ENCODE measurements at regions of chr9 and their contacts with region 1.

Region 1: DNA sequence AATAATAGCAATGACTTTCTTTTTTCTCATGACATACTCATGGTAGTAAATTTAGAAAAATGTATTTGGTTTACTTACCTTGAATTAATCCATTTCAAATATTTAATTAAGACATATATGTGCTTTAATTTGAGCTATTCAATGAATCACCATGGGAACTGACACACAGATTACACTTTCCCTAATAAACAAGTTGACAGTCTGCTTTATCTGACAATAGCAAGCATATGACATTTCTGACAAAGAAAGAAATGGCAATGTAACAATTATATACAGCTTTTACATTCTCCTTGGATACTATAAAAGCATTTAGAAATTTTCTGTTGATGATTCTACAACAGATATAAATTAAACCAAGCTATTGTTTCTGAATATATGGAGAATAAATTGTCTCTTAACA is 382.5 kb downstream of the CYLC2 start:
- DNase-seq: no peak
- H3K4me3 ChIP-seq: no peak overlapping the region
- H3K27ac ChIP-seq: no peak overlapping the region
- H3K4me1 ChIP-seq: no peaks in the 10 kb centered on the region
- H3K27me3 ChIP-seq: no peaks in the 10 kb centered on the region
- CTCF ChIP-seq: no peak
- EP300 ChIP-seq: no peak
- RAD21 ChIP-seq: no peak

Region 2: DNA sequence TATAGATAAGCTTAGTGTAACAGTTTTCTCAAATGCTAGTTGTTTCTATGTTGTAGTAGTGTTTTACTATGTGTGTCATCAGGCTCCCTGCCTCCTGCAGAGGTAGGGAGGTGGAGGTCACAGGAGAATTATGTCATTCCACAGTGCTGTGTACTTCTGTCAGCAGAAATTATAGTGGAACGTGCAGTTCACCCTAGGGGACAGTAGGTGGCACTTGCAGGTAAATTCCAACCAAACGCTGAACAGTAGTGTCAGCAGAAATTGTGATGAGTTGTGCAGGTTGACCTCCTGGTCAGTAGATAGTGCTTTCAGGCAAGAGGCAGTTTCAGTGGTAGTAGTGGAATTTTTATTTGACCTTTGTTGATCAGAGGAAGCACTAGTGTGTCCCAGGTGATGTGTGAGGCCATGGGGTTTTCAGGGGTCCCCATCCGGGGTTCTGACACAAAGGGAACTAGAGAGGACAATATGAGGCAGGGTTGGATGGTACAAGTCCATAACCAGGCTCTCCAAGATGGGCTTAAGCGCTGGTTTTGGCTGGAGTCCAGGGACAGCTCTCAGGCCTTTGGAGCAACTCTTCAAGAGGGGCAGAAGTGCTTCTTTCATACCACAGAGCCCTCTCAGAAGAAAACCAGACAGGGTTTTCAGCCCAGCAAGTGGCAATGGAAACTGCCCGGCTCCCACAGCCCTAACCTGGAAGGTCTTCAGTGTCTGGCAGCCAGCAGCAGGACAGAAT is 20.4 kb after region 1 on chr9:
- CTCF ChIA-PET with region 1: interaction called, 13 read pairs
- POLR2A ChIA-PET with region 1: no interaction called
- DNase-seq: peak; percentile 30
- H3K4me3 ChIP-seq: no peak overlapping the region; a peak in 1 of 4 replicates
- H3K27ac ChIP-seq: no peak overlapping the region
- H3K4me1 ChIP-seq: no peaks in the 10 kb centered on the region
- H3K27me3 ChIP-seq: no peaks in the 10 kb centered on the region
- CTCF ChIP-seq: peak; percentile 67
- EP300 ChIP-seq: no peak
- RAD21 ChIP-seq: peak; percentile 68